GM10248 (cell line): ENCODE measurements at regions of chr12 and their contacts with region 1.

Region 1: DNA sequence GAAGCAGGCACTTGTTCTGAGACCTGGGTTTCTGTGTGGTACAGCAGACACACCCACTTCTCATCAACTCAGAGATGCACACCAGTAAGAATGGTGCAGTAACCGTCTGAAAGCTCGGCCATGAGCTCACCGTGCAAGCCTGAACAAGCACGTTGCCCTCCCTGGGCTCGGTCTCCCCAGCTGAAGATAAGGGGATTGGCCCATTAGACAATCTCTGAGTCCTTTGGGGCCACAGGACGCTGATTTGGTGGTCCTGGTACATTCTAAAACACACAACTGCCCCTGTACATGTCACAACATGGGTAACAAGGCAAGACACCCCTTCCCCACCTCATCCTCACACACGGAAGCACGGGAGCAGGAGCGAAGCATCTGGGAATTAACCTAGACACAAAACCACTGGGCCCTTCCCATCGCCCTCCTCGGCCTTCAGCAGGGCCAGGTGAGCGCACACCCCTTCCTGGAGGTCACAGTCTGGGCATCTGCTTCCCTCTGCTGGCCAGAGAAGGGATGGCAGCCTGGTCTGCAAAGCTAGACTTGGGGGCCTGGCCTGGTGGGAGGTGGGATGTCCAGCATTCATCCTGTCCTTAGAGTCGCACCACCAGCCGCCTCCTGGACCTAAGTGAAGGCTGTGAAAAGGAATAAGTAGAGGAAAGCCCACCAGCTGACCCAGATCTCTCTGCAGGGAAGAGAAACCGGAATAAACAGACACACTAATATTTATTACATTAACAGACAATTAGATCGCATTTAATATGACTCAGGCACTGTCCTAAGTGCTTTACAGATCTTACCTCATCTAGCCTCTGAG is 18.9 kb upstream of the SMUG1 start:
- DNase-seq: peak; percentile 84
- CTCF ChIP-seq: peak; percentile 99

Region 2: GRCh38 chr12:53984901-53985709 is 222.6 kb before region 1 on chr12 and contains the start of gene HOXC10:
- CTCF ChIA-PET with region 1: interaction called, 74 read pairs
- POLR2A ChIA-PET with region 1: no interaction called
- DNase-seq: peak; percentile 87
- CTCF ChIP-seq: peak; percentile 71

Region 3: GRCh38 chr12:54005853-54006686 is 201.6 kb before region 1 on chr12:
- CTCF ChIA-PET with region 1: interaction called, 128 read pairs
- POLR2A ChIA-PET with region 1: no interaction called
- DNase-seq: peak; percentile 82
- CTCF ChIP-seq: peak; percentile 94

Region 4: DNA sequence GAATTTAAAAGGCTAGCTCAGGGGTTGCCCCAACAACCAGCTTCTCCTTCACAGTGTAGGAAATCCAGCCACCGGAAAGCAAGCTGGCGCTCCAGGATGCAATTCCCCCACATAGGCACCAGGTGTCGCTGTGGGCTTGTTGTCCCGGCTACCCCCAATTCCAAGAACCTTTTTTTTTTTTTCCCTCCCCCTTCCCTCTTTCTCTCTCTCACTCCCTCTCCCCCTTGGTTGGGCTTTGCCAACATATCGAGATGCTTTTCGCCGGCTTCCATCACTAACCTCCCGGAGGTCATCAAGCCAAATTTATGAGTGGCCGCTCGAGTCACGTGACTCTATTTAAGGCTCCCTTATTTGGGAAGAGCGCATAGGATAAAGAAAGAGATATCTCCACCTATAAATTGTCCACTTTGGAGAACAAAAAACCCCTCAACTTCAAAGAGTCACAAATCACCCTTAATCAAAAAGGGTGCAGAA is 175.0 kb before region 1 on chr12 and contains the start of gene HOXC5:
- CTCF ChIA-PET with region 1: interaction called, 139 read pairs
- POLR2A ChIA-PET with region 1: no interaction called
- DNase-seq: peak; percentile 86
- CTCF ChIP-seq: peak; percentile 93

Region 5: GRCh38 chr12:54173066-54173726 is 34.5 kb before region 1 on chr12:
- CTCF ChIA-PET with region 1: interaction called, 19 read pairs
- POLR2A ChIA-PET with region 1: no interaction called
- DNase-seq: peak; percentile 40
- CTCF ChIP-seq: no peak

Region 6: DNA sequence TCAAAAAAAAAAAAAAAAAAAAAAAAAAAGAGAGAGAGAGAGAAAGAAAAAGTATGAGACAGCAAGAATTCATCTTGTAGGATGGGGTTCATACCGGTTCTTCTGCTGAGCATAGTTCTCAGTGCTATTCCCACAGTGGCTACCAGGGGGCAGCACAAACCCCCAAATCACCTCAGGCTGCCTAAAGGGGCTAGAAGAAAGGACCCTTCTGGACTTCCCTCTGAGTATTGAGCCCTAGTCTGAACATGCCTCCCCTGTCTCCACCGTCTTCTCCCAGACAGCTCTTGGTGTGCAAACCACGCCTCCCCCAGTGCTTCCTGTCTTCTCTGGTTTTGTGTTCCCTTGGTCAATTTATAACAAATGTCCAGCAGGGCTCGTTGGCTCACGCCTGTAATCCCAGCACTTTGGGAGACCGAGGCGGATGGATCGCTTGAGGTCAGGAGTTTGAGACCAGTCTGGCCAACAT is 12.4 kb after region 1 on chr12:
- CTCF ChIA-PET with region 1: interaction called, 43 read pairs
- POLR2A ChIA-PET with region 1: no interaction called
- DNase-seq: peak; percentile 69
- CTCF ChIP-seq: peak; percentile 89